ENCODE measurements at regions of chr19 and their contacts with region 1.

Region 1: DNA sequence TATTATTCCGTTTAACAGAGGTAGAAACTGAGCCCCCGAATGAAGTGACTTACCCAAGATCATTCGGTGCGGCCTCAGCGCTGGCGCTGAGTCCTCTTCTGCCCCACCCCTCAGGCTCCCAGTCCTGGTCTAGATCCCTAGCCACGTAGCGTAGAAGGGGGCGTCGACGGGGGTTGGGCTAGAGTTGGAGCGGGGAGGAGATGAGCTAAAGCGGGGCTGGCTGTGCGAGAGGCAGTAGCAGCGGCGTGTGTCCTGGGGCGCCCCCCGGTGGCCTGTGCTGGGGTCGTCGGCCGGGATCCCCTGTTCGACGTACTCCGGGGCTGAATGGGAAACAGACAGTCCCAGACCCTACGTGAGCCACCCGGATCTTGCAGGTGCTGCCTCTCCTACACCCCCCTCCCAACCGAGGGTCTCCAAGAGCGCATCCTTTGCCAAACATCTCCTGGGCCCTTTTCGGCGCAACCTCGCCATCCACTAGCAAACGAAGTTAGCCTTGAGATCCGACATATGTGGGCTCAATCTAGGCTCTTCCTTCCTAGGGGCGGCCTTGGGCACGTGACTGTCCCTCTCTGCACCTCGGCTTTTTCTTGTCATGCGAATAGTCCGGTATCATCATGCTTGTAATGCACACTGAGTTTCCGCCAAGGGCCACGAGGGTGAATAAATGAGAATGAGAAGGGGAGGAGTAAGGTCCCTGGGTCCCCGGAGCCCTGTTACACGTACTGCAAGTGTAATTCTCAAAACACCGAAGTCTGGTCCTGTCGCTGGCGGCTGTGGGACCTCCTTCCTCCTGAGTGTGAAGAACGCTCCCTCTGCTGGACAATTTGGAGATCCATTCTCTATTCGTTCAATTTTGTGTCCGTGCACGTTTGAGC is 47.7 kb downstream of the CYP4F22 start:
- DNase-seq: peak; percentile 99
- H3K4me3 Mint-ChIP-seq: peak overlapping the region; percentile 74
- H3K27ac Mint-ChIP-seq: peak overlapping the region; percentile 74
- H3K4me1 Mint-ChIP-seq: peaks cover 20% of the 10 kb centered on the region
- H3K27me3 Mint-ChIP-seq: peaks cover 6% of the 10 kb centered on the region

Region 2: GRCh38 chr19:15091901-15092753 is 463.9 kb before region 1 on chr19:
- CTCF ChIA-PET with region 1: no interaction called
- POLR2A ChIA-PET with region 1: no interaction called
- intact Hi-C with region 1: loop called (anchors 1 kb)
- DNase-seq: peak; percentile 32
- H3K4me3 Mint-ChIP-seq: no peak overlapping the region
- H3K27ac Mint-ChIP-seq: no peak overlapping the region
- H3K4me1 Mint-ChIP-seq: no peaks in the 10 kb centered on the region
- H3K27me3 Mint-ChIP-seq: peaks cover 11% of the 10 kb centered on the region

Region 3: GRCh38 chr19:15264061-15264932 is 291.7 kb before region 1 on chr19:
- CTCF ChIA-PET with region 1: interaction called, 4 read pairs
- POLR2A ChIA-PET with region 1: no interaction called
- intact Hi-C with region 1: loop called (anchors 2 kb)
- DNase-seq: peak; percentile 80
- H3K4me3 Mint-ChIP-seq: no peak overlapping the region
- H3K27ac Mint-ChIP-seq: no peak overlapping the region
- H3K4me1 Mint-ChIP-seq: peaks cover 10% of the 10 kb centered on the region
- H3K27me3 Mint-ChIP-seq: no peaks in the 10 kb centered on the region

Region 4: GRCh38 chr19:15412832-15413231 is 143.2 kb before region 1 on chr19:
- CTCF ChIA-PET with region 1: interaction called, 225 read pairs
- POLR2A ChIA-PET with region 1: interaction called, 3 read pairs
- intact Hi-C with region 1: no loop called
- DNase-seq: no peak
- H3K4me3 Mint-ChIP-seq: no peak overlapping the region
- H3K27ac Mint-ChIP-seq: no peak overlapping the region
- H3K4me1 Mint-ChIP-seq: peaks cover 41% of the 10 kb centered on the region
- H3K27me3 Mint-ChIP-seq: no peaks in the 10 kb centered on the region

Region 5: GRCh38 chr19:15466851-15467733 is 88.9 kb before region 1 on chr19:
- CTCF ChIA-PET with region 1: interaction called, 22 read pairs
- POLR2A ChIA-PET with region 1: interaction called, 8 read pairs
- intact Hi-C with region 1: loop called (anchors 1 kb)
- DNase-seq: peak; percentile 84
- H3K4me3 Mint-ChIP-seq: peak overlapping the region; percentile 41
- H3K27ac Mint-ChIP-seq: peak overlapping the region; percentile 93
- H3K4me1 Mint-ChIP-seq: peaks cover 52% of the 10 kb centered on the region
- H3K27me3 Mint-ChIP-seq: no peaks in the 10 kb centered on the region

Region 6: DNA sequence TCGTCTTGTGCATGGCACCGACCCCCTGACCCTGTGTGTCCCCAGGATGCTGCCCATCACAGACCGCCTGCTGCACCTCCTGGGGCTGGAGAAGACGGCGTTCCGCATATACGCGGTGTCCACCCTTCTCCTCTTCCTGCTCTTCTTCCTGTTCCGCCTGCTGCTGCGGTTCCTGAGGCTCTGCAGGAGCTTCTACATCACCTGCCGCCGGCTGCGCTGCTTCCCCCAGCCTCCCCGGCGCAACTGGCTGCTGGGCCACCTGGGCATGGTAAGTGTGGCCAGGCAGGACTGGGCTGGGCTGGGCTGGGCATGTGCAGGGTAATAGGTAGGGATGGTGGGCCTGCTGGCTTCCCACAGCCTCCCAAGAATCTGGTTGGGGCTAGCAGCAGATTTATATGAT is 30.7 kb before region 1 on chr19:
- CTCF ChIA-PET with region 1: no interaction called
- POLR2A ChIA-PET with region 1: no interaction called
- intact Hi-C with region 1: no loop called
- DNase-seq: no peak
- H3K4me3 Mint-ChIP-seq: no peak overlapping the region
- H3K27ac Mint-ChIP-seq: no peak overlapping the region
- H3K4me1 Mint-ChIP-seq: no peaks in the 10 kb centered on the region
- H3K27me3 Mint-ChIP-seq: no peaks in the 10 kb centered on the region

Measured in activated CD4-positive, alpha-beta memory T cell treated with anti-CD3 and anti-CD28 coated beads for 36 hours (primary cell).